ENCODE measurements at regions of chr2 and their contacts with region 1.

Region 1: GRCh38 chr2:95121407-95122196 is at the start of gene MRPS5:
- DNase-seq: peak; percentile 87
- H3K4me3 ChIP-seq: peak within 1 kb of the TSS; percentile 75 to 94 (median 84)
- H3K27ac ChIP-seq: peak within 1 kb of the TSS; percentile 89 to 95 (median 92)
- H3K4me1 ChIP-seq: peaks cover 0 to 35% (median 26%) of the 10 kb centered on the region in 4 donors
- H3K27me3 ChIP-seq: no peaks in the 10 kb centered on the region
- CTCF ChIP-seq: no peak
- EP300 ChIP-seq: no peak
- POLR2A ChIP-seq: no peak
- total RNA-seq, gene MRPS5: 43.5 to 77.3 (median 48.3) TPM

Region 2: DNA sequence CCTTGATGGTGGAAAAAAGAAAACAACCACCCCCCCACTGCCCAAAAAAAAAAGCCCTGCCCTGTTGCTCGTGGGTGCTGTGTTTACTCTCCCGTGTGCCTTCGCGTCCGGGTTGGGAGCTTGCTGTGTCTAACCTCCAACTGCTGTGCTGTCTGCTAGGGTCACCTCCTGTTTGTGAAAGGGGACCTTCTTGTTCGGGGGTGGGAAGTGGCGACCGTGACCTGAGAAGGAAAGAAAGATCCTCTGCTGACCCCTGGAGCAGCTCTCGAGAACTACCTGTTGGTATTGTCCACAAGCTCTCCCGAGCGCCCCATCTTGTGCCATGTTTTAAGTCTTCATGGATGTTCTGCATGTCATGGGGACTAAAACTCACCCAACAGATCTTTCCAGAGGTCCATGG is 68.1 kb before region 1 on chr2:
- intact Hi-C with region 1: no loop called
- DNase-seq: peak; percentile 56
- H3K4me3 ChIP-seq: no peak overlapping the region
- H3K27ac ChIP-seq: no peak overlapping the region
- H3K4me1 ChIP-seq: no peaks in the 10 kb centered on the region
- H3K27me3 ChIP-seq: peaks cover 0 to 16% (median 0%) of the 10 kb centered on the region in 3 donors
- CTCF ChIP-seq: no peak
- EP300 ChIP-seq: no peak
- POLR2A ChIP-seq: no peak

Region 3: GRCh38 chr2:95159690-95160449 is 38.3 kb after region 1 on chr2 and contains the start of gene ZNF514:
- intact Hi-C with region 1: loop called (anchors 1 kb)
- DNase-seq: peak; percentile 92
- H3K4me3 ChIP-seq: peak within 1 kb of the TSS; percentile 71 to 80 (median 75)
- H3K27ac ChIP-seq: peak within 1 kb of the TSS; percentile 84 to 91 (median 90)
- H3K4me1 ChIP-seq: peaks cover 0 to 28% (median 23%) of the 10 kb centered on the region in 4 donors
- H3K27me3 ChIP-seq: no peaks in the 10 kb centered on the region
- CTCF ChIP-seq: no peak
- EP300 ChIP-seq: no peak
- POLR2A ChIP-seq: no peak
- total RNA-seq, gene ZNF514: 12.0 to 29.4 (median 16.5) TPM